Activated naive CD4-positive, alpha-beta T cell treated with anti-CD3 and anti-CD28 coated beads for 36 hours (primary cell): ENCODE measurements at regions of chr14 and their contacts with region 1.

Region 1: GRCh38 chr14:73753959-73754882 is 40.0 kb upstream of the PNMA1 start:
- DNase-seq: peak; percentile 85
- H3K4me3 Mint-ChIP-seq: peak overlapping the region; percentile 91
- H3K27ac Mint-ChIP-seq: peak overlapping the region; percentile 95
- H3K4me1 Mint-ChIP-seq: peaks cover 88% of the 10 kb centered on the region
- H3K27me3 Mint-ChIP-seq: no peaks in the 10 kb centered on the region

Region 2: GRCh38 chr14:73245401-73246325 is 508.6 kb before region 1 on chr14:
- CTCF ChIA-PET with region 1: no interaction called
- intact Hi-C with region 1: no loop called
- DNase-seq: peak; percentile 67
- H3K4me3 Mint-ChIP-seq: peak overlapping the region; percentile 73
- H3K27ac Mint-ChIP-seq: no peak overlapping the region
- H3K4me1 Mint-ChIP-seq: peaks cover 13% of the 10 kb centered on the region
- H3K27me3 Mint-ChIP-seq: peaks cover 43% of the 10 kb centered on the region

Region 3: DNA sequence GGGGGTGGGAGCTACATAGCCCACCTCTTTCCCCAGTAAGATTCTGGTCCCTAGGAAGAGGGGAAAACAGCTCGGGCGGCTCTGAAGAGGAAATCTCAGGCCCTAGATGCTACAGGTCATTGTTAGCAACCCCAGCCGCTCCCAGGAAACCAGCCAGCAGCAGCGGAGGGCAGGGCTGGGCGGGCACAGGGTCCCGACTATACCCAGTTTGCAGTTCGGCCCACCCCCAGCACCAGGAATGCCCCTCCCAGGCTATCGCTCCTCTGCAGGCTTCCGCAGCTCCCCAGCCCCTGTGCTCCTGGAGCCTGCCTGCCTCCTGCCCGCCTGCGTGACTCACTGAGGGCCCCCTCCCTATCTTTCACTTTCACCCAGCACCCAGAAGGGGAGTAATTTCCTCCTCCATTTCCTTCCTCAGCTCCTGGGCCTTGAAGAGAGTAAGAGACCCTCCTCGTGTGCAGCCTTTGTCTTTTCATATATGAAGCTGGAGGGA is 12.8 kb before region 1 on chr14:
- CTCF ChIA-PET with region 1: interaction called, 112 read pairs
- intact Hi-C with region 1: loop called (anchors 1 kb)
- DNase-seq: peak; percentile 88
- H3K4me3 Mint-ChIP-seq: peak overlapping the region; percentile 43
- H3K27ac Mint-ChIP-seq: peak overlapping the region; percentile 84
- H3K4me1 Mint-ChIP-seq: peaks cover 63% of the 10 kb centered on the region
- H3K27me3 Mint-ChIP-seq: no peaks in the 10 kb centered on the region

Region 4: DNA sequence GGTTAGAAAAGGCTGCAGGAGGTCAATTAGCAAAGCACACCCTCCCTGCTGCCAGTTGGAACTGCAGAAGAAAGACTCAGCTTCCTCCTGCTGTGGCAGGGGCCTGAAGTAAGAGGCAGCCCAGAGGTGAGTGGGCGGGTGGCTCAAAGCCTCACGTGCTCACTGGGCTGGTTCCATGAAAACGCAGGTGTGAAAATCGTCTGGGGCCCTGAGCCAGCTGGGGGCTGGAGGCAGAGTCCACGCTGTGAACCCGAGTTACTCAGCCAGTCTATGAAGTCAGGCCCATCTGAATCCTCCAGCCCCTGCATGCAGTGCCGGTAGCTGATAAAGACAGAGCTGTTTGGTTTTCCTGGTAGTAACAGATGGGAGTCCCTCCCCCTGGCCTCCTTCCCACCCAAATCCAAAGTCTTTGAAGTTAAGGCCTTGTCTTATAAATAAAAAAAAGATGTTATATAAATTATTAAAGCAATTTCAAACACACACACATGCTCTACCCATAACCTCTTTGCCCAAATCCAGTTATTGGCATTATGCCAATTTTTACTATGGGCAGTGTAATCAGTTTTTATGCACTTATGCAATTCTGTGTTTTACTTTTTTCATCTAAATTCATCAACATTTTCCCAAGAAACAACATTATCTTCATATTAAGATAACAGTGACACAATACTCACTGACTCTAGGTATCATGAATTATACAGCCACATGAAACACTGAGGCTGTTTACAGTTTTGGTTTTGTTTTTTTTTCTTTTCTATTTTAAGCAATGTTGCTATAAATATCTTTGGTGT is 17.8 kb after region 1 on chr14:
- CTCF ChIA-PET with region 1: interaction called, 45 read pairs
- intact Hi-C with region 1: loop called (anchors 2 kb)
- DNase-seq: peak; percentile 92
- H3K4me3 Mint-ChIP-seq: peak overlapping the region; percentile 56
- H3K27ac Mint-ChIP-seq: peak overlapping the region; percentile 80
- H3K4me1 Mint-ChIP-seq: peaks cover 66% of the 10 kb centered on the region
- H3K27me3 Mint-ChIP-seq: no peaks in the 10 kb centered on the region